CD8-positive, alpha-beta T cell (primary cell): ENCODE measurements at regions of chr7 and their contacts with region 1.

Region 1: GRCh38 chr7:73738612-73739374 is at the start of gene ABHD11:
- DNase-seq: peak; percentile 96 to 100 (median 99)
- ATAC-seq: peak; percentile 87
- H3K4me3 ChIP-seq: peak within 1 kb of the TSS; percentile 76 to 92
- H3K4me3 Mint-ChIP-seq: peak within 1 kb of the TSS; percentile 88
- H3K27ac ChIP-seq: peak within 1 kb of the TSS; percentile 74 to 81
- H3K27ac Mint-ChIP-seq: peak within 1 kb of the TSS; percentile 93
- H3K4me1 ChIP-seq: peaks cover 17% of the 10 kb centered on the region
- H3K4me1 Mint-ChIP-seq: peaks cover 13% of the 10 kb centered on the region
- H3K27me3 ChIP-seq: no peaks in the 10 kb centered on the region
- H3K27me3 Mint-ChIP-seq: no peaks in the 10 kb centered on the region
- CTCF ChIP-seq: no peak
- total RNA-seq, gene ABHD11: 12.2 to 12.3 TPM

Region 2: DNA sequence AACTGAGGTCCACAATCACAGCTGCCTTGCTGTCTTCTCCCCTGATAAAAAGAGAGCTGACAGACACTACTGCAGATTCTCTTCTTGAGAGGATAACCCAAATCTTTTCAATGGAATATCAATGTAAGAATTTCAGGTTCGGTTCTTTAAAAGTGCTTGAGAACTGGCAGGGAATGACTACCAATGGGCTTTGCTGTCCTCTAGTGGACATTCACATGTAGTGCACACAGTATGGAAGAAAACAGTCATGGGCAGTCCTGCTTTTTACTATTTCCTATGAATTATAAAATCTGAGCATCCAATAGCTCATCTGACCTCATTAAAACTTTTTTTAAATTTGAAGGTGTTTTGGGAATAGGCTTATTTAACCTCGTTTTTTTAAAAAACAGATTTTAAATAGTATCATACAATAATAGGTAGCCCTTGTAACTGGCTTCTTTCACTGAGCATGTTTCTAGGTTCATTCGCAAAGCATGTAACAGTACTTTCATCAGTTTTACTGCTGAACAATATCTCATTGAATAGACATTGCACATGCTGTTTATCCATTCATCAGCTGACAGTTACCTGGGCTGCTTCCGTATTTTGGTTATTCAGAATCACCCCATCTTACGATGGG is 286.9 kb before region 1 on chr7:
- CTCF ChIA-PET with region 1: interaction called, 3 read pairs
- POLR2A ChIA-PET with region 1: no interaction called
- intact Hi-C with region 1: loop called (anchors 10 kb)
- DNase-seq: peak in 4 of 9 experiments; percentile 21 to 77 (median 44)
- ATAC-seq: peak; percentile 98
- H3K4me3 ChIP-seq: no peak overlapping the region
- H3K4me3 Mint-ChIP-seq: no peak overlapping the region
- H3K27ac ChIP-seq: no peak overlapping the region
- H3K27ac Mint-ChIP-seq: no peak overlapping the region
- H3K4me1 ChIP-seq: no peaks in the 10 kb centered on the region
- H3K4me1 Mint-ChIP-seq: peaks cover 22% of the 10 kb centered on the region
- H3K27me3 ChIP-seq: no peaks in the 10 kb centered on the region
- H3K27me3 Mint-ChIP-seq: no peaks in the 10 kb centered on the region
- CTCF ChIP-seq: peak; percentile 98

Region 3: DNA sequence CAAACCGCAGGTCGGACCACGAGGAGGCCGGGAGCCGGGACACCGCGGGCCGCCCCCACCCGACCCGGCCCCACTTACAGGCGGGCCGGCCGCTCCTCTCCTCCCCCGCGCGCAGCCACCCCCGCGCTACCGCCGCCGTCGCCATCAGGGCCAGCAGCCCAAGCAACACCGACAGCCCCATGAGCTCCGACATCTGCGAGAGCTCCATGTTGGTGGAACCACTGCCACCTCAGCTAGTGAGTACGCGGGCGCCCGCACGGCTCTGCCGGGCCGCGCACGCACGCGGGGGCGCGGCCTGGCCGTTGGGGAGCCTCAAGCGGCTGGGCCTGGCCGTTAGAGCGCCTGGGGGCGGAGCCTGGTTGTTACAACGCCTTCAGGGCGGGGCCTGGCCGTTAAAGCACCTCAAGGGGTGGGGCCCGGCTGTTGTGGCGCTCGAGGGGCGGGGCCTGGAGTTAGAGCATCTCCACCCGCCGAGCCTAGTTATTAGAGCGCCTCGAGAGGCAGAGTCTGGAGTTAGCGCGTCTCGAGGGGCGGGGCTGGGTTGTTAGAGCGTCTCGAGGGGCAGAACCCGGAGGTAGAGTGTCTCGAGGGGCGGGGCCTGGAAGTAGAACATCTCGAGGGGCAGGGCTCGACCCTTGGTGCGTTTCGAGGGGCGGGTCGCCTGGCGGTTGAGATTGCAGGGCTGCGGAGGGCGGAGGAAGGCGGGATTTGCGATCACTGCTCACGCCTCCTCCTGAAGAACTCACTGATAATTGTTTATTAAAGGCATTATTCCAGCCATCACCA is 160.3 kb before region 1 on chr7 and contains the start of gene TBL2:
- CTCF ChIA-PET with region 1: interaction called, 3 read pairs
- POLR2A ChIA-PET with region 1: interaction called, 3 read pairs
- intact Hi-C with region 1: loop called (anchors 1 kb)
- DNase-seq: peak; percentile 96 to 99 (median 99)
- ATAC-seq: peak; percentile 91
- H3K4me3 ChIP-seq: peak within 1 kb of the TSS; percentile 77 to 97
- H3K4me3 Mint-ChIP-seq: peak within 1 kb of the TSS; percentile 94
- H3K27ac ChIP-seq: peak within 1 kb of the TSS; percentile 72 to 95
- H3K27ac Mint-ChIP-seq: peak within 1 kb of the TSS; percentile 97
- H3K4me1 ChIP-seq: peaks cover 21% of the 10 kb centered on the region
- H3K4me1 Mint-ChIP-seq: peaks cover 27% of the 10 kb centered on the region
- H3K27me3 ChIP-seq: no peaks in the 10 kb centered on the region
- H3K27me3 Mint-ChIP-seq: no peaks in the 10 kb centered on the region
- CTCF ChIP-seq: no peak
- total RNA-seq, gene TBL2: 14.9 to 16.7 TPM

Region 4: GRCh38 chr7:73683056-73683964 is 55.5 kb before region 1 on chr7 and contains the starts of genes BUD23 and DNAJC30:
- CTCF ChIA-PET with region 1: no interaction called
- POLR2A ChIA-PET with region 1: no interaction called
- intact Hi-C with region 1: loop called (anchors 1 kb)
- DNase-seq: peak; percentile 95 to 97 (median 97)
- ATAC-seq: peak; percentile 98
- H3K4me3 ChIP-seq: peak within 1 kb of the TSS; percentile 80 to 96
- H3K4me3 Mint-ChIP-seq: peak within 1 kb of the TSS; percentile 93
- H3K27ac ChIP-seq: peak within 1 kb of the TSS; percentile 81 to 90
- H3K27ac Mint-ChIP-seq: peak within 1 kb of the TSS; percentile 97
- H3K4me1 ChIP-seq: peaks cover 29% of the 10 kb centered on the region
- H3K4me1 Mint-ChIP-seq: peaks cover 39% of the 10 kb centered on the region
- H3K27me3 ChIP-seq: no peaks in the 10 kb centered on the region
- H3K27me3 Mint-ChIP-seq: no peaks in the 10 kb centered on the region
- CTCF ChIP-seq: no peak
- total RNA-seq, gene BUD23: 123 to 129 TPM
- total RNA-seq, gene DNAJC30: 13.5 to 14.4 TPM

Region 5: DNA sequence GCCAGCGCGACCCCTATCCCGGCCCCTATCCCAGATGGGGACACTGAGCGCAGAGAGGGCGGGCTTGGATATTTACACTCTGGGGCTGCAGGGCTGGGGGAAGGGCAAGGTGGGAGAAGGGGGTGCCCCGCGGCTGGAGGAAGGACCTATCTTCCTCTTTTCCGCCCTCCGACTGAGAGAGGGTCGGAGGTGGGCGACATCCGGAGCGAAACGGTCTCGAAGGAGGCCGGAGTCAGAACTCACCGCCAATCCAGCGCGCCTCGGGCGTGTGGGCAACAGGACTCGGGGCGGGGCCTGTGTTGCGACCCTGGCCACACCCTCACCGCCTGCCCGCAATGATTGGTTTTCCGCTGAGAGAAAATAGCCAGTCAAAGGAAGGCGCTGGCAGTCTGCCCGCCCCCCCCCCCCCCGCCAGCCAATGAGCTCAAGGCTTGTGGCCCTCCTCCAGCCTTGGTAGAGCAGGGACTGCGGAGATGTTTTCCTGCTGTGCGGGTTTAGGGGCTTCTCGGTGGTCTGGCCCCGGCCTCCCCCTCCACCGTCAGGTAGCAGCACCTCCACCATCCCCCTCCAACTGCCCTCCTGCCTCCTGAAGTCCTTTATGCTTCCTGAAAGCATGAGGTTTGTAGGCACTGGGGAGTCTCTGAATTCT is 103.6 kb after region 1 on chr7 and contains the start of gene METTL27:
- CTCF ChIA-PET with region 1: no interaction called
- POLR2A ChIA-PET with region 1: no interaction called
- intact Hi-C with region 1: loop called (anchors 1 to 2 kb)
- DNase-seq: peak; percentile 76 to 94 (median 90)
- ATAC-seq: peak; percentile 98
- H3K4me3 ChIP-seq: peak within 1 kb of the TSS; percentile 58 to 77
- H3K4me3 Mint-ChIP-seq: peak within 1 kb of the TSS; percentile 85
- H3K27ac ChIP-seq: no peak within 1 kb of the TSS
- H3K27ac Mint-ChIP-seq: peak within 1 kb of the TSS; percentile 69
- H3K4me1 ChIP-seq: peaks cover 5% of the 10 kb centered on the region
- H3K4me1 Mint-ChIP-seq: peaks cover 13% of the 10 kb centered on the region
- H3K27me3 ChIP-seq: no peaks in the 10 kb centered on the region
- H3K27me3 Mint-ChIP-seq: no peaks in the 10 kb centered on the region
- CTCF ChIP-seq: no peak
- total RNA-seq, gene METTL27: not detected

Region 6: GRCh38 chr7:74656837-74657691 is 918.3 kb after region 1 on chr7:
- CTCF ChIA-PET with region 1: no interaction called
- POLR2A ChIA-PET with region 1: no interaction called
- intact Hi-C with region 1: loop called (anchors 5 kb)
- DNase-seq: peak; percentile 95 to 99 (median 98)
- ATAC-seq: peak; percentile 74
- H3K4me3 ChIP-seq: peak overlapping the region; percentile 77 to 88
- H3K4me3 Mint-ChIP-seq: peak overlapping the region; percentile 88
- H3K27ac ChIP-seq: peak overlapping the region; percentile 54 to 69
- H3K27ac Mint-ChIP-seq: peak overlapping the region; percentile 85
- H3K4me1 ChIP-seq: peaks cover 33% of the 10 kb centered on the region
- H3K4me1 Mint-ChIP-seq: peaks cover 45% of the 10 kb centered on the region
- H3K27me3 ChIP-seq: no peaks in the 10 kb centered on the region
- H3K27me3 Mint-ChIP-seq: no peaks in the 10 kb centered on the region
- CTCF ChIP-seq: no peak